ENCODE measurements at regions of chr16 and their contacts with region 1.

Region 1: GRCh38 chr16:50548125-50548908 is at the start of gene NKD1:
- DNase-seq: peak; percentile 44 to 85 (median 73)
- ATAC-seq: peak; percentile 68
- H3K4me3 ChIP-seq: peak within 1 kb of the TSS; percentile 71 to 76
- H3K4me3 Mint-ChIP-seq: peak within 1 kb of the TSS; percentile 88
- H3K27ac ChIP-seq: peak within 1 kb of the TSS; percentile 39 to 60
- H3K27ac Mint-ChIP-seq: peak within 1 kb of the TSS; percentile 92
- H3K4me1 ChIP-seq: peaks cover 32% of the 10 kb centered on the region
- H3K4me1 Mint-ChIP-seq: peaks cover 31% of the 10 kb centered on the region
- H3K27me3 ChIP-seq: no peaks in the 10 kb centered on the region
- H3K27me3 Mint-ChIP-seq: no peaks in the 10 kb centered on the region
- CTCF ChIP-seq: no peak
- total RNA-seq, gene NKD1: 6.0 to 7.5 TPM

Region 2: GRCh38 chr16:50024684-50025536 is 523.4 kb before region 1 on chr16 and contains the start of gene CNEP1R1:
- CTCF ChIA-PET with region 1: no interaction called
- POLR2A ChIA-PET with region 1: no interaction called
- intact Hi-C with region 1: loop called in 1 of 2 experiments (anchors 10 kb)
- DNase-seq: peak; percentile 86 to 97 (median 91)
- ATAC-seq: peak; percentile 93
- H3K4me3 ChIP-seq: peak within 1 kb of the TSS; percentile 74 to 79
- H3K4me3 Mint-ChIP-seq: peak within 1 kb of the TSS; percentile 97
- H3K27ac ChIP-seq: peak within 1 kb of the TSS; percentile 49 to 65
- H3K27ac Mint-ChIP-seq: peak within 1 kb of the TSS; percentile 94
- H3K4me1 ChIP-seq: peaks cover 17% of the 10 kb centered on the region
- H3K4me1 Mint-ChIP-seq: peaks cover 27% of the 10 kb centered on the region
- H3K27me3 ChIP-seq: no peaks in the 10 kb centered on the region
- H3K27me3 Mint-ChIP-seq: no peaks in the 10 kb centered on the region
- CTCF ChIP-seq: peak; percentile 99
- total RNA-seq, gene CNEP1R1: 37.6 to 41.0 TPM

Region 3: DNA sequence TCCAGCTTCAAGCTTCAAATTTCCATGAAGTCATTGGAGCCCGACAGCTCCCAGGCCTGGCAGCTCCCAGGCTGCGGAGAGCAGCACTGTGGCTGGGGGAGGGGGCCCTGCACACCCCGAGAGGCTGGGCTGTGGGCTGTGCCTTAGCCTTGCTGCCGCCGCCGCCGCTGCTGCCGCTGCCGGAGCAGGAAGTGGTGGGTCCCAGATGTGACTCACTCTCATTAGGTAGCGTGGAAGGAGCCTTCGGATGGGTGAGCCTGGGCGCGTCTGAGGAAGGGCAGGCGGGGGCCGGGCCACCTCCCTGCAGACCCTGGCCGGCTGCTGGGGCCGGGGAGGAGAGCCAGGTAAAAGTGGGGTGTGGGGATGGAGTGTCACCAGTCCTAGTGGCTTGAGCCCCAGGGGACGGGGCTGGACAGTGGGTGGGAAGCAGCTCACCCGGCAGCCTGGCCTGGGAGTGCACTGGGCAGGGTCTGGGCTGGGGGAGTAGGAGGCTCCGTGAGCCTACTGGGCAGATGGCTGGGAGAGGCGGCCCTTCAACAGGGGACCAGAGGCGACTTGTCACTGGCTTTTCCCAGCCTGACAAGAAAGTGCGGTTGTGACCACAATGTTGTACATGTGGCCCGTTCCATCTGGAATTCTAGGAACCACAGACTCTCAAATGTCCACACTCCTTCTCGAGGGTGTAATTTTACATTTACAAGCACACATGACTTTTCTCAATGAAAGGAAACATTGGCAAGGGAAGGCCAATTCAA is 281.8 kb before region 1 on chr16 and contains the start of gene ADCY7:
- CTCF ChIA-PET with region 1: no interaction called
- POLR2A ChIA-PET with region 1: no interaction called
- intact Hi-C with region 1: loop called in 1 of 2 experiments (anchors 5 kb)
- DNase-seq: peak; percentile 58 to 90 (median 88)
- ATAC-seq: peak; percentile 83
- H3K4me3 ChIP-seq: peak within 1 kb of the TSS; percentile 91 to 94
- H3K4me3 Mint-ChIP-seq: peak within 1 kb of the TSS; percentile 97
- H3K27ac ChIP-seq: peak within 1 kb of the TSS; percentile 77 to 86
- H3K27ac Mint-ChIP-seq: peak within 1 kb of the TSS; percentile 98
- H3K4me1 ChIP-seq: peaks cover 68% of the 10 kb centered on the region
- H3K4me1 Mint-ChIP-seq: peaks cover 71% of the 10 kb centered on the region
- H3K27me3 ChIP-seq: no peaks in the 10 kb centered on the region
- H3K27me3 Mint-ChIP-seq: no peaks in the 10 kb centered on the region
- CTCF ChIP-seq: no peak
- total RNA-seq, gene ADCY7: 117 to 126 TPM

Region 4: GRCh38 chr16:50407351-50407750 is 141.0 kb before region 1 on chr16:
- CTCF ChIA-PET with region 1: no interaction called
- POLR2A ChIA-PET with region 1: no interaction called
- intact Hi-C with region 1: no loop called
- DNase-seq: peak in 2 of 9 experiments; percentile 7 to 42
- ATAC-seq: no peak
- H3K4me3 ChIP-seq: no peak overlapping the region
- H3K4me3 Mint-ChIP-seq: no peak overlapping the region
- H3K27ac ChIP-seq: no peak overlapping the region
- H3K27ac Mint-ChIP-seq: no peak overlapping the region
- H3K4me1 ChIP-seq: no peaks in the 10 kb centered on the region
- H3K4me1 Mint-ChIP-seq: no peaks in the 10 kb centered on the region
- H3K27me3 ChIP-seq: no peaks in the 10 kb centered on the region
- H3K27me3 Mint-ChIP-seq: peaks cover 4% of the 10 kb centered on the region
- CTCF ChIP-seq: no peak

Region 5: DNA sequence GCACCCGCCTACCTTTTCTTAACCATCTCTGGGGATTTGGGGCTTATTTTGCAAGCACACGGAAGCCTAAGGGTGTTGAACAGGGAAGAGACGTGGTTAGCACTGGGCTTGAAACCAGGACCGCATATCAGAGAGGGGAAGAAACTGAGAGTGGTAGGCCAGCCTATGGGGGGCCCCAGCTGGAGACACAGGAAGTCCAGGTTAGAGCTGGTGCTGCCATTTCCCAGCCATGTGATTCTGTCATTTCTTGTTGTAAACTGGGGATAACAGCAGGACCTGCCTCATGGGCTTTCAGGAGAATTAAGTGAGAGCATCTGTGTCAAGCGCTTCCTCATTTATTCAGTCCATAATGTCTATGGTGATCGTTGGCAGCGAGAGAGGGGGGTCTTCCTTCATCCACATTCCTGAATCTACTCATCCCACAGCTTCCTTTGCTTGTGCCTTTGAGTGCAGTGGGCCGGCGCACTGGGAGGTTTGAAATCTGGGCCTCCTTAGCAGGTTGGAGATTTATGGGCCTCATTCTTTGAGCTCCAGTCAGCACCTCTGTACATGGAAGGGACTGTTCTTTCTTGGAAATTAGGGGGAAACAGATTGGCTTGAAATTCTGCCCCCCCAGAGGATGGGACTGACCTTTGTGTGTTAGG is 20.0 kb after region 1 on chr16:
- CTCF ChIA-PET with region 1: no interaction called
- POLR2A ChIA-PET with region 1: no interaction called
- intact Hi-C with region 1: loop called in 1 of 2 experiments (anchors 2 kb)
- DNase-seq: no peak
- ATAC-seq: no peak
- H3K4me3 ChIP-seq: no peak overlapping the region
- H3K4me3 Mint-ChIP-seq: no peak overlapping the region
- H3K27ac ChIP-seq: no peak overlapping the region
- H3K27ac Mint-ChIP-seq: no peak overlapping the region
- H3K4me1 ChIP-seq: peaks cover 8% of the 10 kb centered on the region
- H3K4me1 Mint-ChIP-seq: peaks cover 16% of the 10 kb centered on the region
- H3K27me3 ChIP-seq: no peaks in the 10 kb centered on the region
- H3K27me3 Mint-ChIP-seq: no peaks in the 10 kb centered on the region
- CTCF ChIP-seq: no peak

Region 6: GRCh38 chr16:50581845-50582244 is 33.5 kb after region 1 on chr16:
- CTCF ChIA-PET with region 1: no interaction called
- POLR2A ChIA-PET with region 1: no interaction called
- intact Hi-C with region 1: no loop called
- DNase-seq: no peak
- ATAC-seq: no peak
- H3K4me3 ChIP-seq: no peak overlapping the region
- H3K4me3 Mint-ChIP-seq: no peak overlapping the region
- H3K27ac ChIP-seq: no peak overlapping the region
- H3K27ac Mint-ChIP-seq: no peak overlapping the region
- H3K4me1 ChIP-seq: peaks cover 6% of the 10 kb centered on the region
- H3K4me1 Mint-ChIP-seq: peaks cover 12% of the 10 kb centered on the region
- H3K27me3 ChIP-seq: no peaks in the 10 kb centered on the region
- H3K27me3 Mint-ChIP-seq: no peaks in the 10 kb centered on the region
- CTCF ChIP-seq: no peak

Region 7: DNA sequence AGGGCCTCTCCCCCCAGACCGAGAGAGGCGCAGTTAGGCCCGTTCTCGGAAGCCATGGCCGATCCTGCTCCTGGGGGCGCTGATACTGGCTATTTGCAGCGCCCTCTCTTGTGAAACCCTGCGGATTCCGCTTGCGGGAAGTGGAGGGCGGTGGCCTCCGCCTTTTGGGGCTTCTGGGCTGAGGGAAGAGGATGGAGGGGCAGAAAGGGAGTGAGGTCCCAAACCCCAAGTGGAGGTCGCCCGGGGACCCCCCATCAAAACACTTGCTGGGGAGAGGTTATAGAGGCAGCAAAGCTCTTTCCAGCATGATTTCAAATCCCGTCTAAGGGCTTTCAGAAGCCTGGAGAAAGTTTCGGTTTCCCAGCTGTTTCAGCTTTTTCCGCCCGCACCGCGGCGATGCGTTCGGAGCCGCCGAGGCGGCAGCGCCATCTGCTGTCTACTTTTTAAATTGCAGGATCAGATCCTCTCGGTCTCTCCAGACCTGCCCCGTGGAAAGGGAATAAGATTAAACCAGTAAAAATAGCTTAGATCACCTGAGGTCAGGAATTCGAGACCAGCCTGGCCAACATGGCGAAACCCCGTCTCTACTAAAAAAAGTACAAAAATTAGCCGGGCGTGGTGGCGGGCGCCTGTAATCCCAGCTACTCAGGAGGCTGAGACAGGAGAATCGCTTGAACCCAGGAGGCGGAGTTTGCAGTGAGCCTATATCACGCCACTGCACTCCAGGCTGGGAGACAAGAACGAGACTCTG is 117.0 kb after region 1 on chr16:
- CTCF ChIA-PET with region 1: no interaction called
- POLR2A ChIA-PET with region 1: interaction called, 3 read pairs
- intact Hi-C with region 1: loop called (anchors 1 kb)
- DNase-seq: peak; percentile 70 to 92 (median 83)
- ATAC-seq: peak; percentile 73
- H3K4me3 ChIP-seq: peak overlapping the region; percentile 39 to 57
- H3K4me3 Mint-ChIP-seq: peak overlapping the region; percentile 82
- H3K27ac ChIP-seq: peak overlapping the region in 1 of 2 experiments; percentile 46
- H3K27ac Mint-ChIP-seq: no peak overlapping the region
- H3K4me1 ChIP-seq: peaks cover 21% of the 10 kb centered on the region
- H3K4me1 Mint-ChIP-seq: peaks cover 36% of the 10 kb centered on the region
- H3K27me3 ChIP-seq: no peaks in the 10 kb centered on the region
- H3K27me3 Mint-ChIP-seq: no peaks in the 10 kb centered on the region
- CTCF ChIP-seq: peak; percentile 93

Region 8: DNA sequence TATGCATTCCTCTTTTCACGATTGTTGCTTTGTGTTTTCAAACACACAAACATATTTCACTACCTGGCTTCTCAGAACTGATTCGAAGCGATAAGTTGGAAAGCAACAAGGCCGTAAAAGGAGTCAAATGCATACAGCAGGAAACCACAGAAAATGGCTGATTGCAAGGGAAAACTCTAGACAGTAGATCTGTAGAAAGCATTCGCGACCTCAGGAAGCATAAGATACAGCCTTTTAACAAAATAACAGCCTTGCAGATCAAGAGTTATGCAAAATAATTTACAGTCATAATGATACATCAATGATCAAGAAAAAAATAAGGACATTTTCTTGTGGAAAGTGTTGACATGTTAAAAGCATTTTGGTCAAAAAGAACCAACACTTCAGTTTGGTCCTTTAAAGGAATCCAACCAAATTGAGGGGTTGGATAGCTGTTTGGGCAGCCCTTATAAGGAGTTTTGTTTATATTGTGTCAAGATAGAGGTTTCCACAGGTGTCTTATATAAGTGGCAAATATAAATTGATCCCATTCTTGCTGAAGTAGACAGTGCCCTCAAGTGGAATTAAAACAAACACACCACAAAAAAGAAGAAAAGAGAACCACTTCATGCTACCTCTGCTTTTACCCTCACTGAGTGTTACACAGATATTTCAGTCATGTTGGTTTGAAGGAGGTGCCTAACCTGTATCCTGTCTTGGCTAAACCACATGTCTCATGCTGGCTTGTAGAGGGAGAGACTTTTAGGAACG is 199.1 kb after region 1 on chr16:
- CTCF ChIA-PET with region 1: no interaction called
- POLR2A ChIA-PET with region 1: no interaction called
- intact Hi-C with region 1: loop called (anchors 1 kb)
- DNase-seq: peak in 3 of 9 experiments; percentile 21 to 80 (median 67)
- ATAC-seq: peak; percentile 68
- H3K4me3 ChIP-seq: peak overlapping the region; percentile 12 to 23
- H3K4me3 Mint-ChIP-seq: peak overlapping the region; percentile 80
- H3K27ac ChIP-seq: peak overlapping the region; percentile 47 to 99
- H3K27ac Mint-ChIP-seq: peak overlapping the region; percentile 94
- H3K4me1 ChIP-seq: peaks cover 65% of the 10 kb centered on the region
- H3K4me1 Mint-ChIP-seq: peaks cover 71% of the 10 kb centered on the region
- H3K27me3 ChIP-seq: no peaks in the 10 kb centered on the region
- H3K27me3 Mint-ChIP-seq: no peaks in the 10 kb centered on the region
- CTCF ChIP-seq: peak; percentile 67

Measured in CD8-positive, alpha-beta T cell (primary cell).